CD8-positive, alpha-beta T cell (primary cell): ENCODE measurements at regions of chr12 and their contacts with region 1.

Region 1: DNA sequence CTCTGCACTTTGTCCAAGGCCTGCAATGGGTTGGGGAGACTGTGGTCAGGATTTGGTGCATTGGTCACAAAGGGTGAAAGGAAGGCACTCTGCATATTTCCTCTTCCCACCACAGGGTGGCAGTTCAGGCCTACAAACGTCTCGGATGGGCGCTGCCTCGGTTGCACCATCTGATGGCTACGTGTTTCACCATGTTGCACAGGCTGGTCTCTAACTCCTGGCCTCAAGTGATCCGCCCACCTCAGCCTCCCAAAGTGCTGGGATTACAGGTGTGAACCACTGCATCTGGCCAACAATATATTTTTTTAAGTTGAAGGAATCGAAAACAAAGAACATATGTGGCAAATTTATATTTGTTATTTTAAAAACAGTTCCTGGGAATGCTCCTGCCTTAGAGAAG is 35.1 kb downstream of the TMBIM6 start:
- DNase-seq: peak in 8 of 9 experiments; percentile 20 to 72 (median 48)
- ATAC-seq: peak; percentile 74
- H3K4me3 ChIP-seq: no peak overlapping the region
- H3K4me3 Mint-ChIP-seq: no peak overlapping the region
- H3K27ac ChIP-seq: no peak overlapping the region
- H3K27ac Mint-ChIP-seq: no peak overlapping the region
- H3K4me1 ChIP-seq: peaks cover 10% of the 10 kb centered on the region
- H3K4me1 Mint-ChIP-seq: peaks cover 16% of the 10 kb centered on the region
- H3K27me3 ChIP-seq: no peaks in the 10 kb centered on the region
- H3K27me3 Mint-ChIP-seq: peaks cover 24% of the 10 kb centered on the region
- CTCF ChIP-seq: peak; percentile 55

Region 2: DNA sequence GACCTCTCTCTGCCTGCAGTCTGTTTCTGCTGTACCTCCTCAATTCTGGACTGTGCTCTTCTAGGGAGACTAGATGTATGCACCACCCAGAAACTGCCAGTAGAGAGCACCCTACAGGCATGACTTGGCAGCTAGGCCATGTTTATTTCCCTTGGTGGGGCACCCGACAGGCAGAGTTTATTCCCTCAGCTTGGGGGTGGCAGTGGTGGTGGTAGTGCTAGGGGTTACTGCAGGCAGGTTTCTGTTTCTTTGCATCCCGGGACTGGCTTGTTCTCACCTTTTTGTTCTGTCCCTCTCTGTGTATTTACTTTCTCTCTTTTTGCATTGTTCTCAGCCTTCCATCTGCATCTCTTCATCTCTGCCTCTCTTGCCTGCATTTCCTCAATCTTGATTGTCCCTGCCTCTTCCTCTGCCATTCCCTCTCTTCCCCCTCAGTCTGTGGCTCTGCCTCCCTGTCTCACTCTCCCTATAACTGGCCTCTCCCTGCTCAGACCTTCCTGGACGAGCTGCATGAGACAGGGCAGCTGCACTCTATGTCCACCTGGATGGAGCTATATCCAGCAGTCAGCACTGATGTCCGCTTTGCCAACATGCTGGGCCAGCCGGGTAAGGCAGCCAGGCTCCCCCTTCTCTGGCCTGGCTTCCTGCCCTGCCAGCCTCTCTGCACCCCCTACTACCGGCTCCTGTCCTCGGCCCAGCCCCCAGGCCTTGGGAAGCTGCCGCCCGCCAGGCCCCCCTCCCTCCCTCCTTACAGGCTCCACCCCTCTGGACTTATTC is 139.2 kb before region 1 on chr12:
- CTCF ChIA-PET with region 1: interaction called, 5 read pairs
- POLR2A ChIA-PET with region 1: no interaction called
- intact Hi-C with region 1: loop called (anchors 2 kb)
- DNase-seq: peak in 8 of 9 experiments; percentile 39 to 76 (median 62)
- ATAC-seq: peak; percentile 99
- H3K4me3 ChIP-seq: no peak overlapping the region
- H3K4me3 Mint-ChIP-seq: no peak overlapping the region
- H3K27ac ChIP-seq: no peak overlapping the region
- H3K27ac Mint-ChIP-seq: peak overlapping the region; percentile 46
- H3K4me1 ChIP-seq: peaks cover 21% of the 10 kb centered on the region
- H3K4me1 Mint-ChIP-seq: peaks cover 29% of the 10 kb centered on the region
- H3K27me3 ChIP-seq: no peaks in the 10 kb centered on the region
- H3K27me3 Mint-ChIP-seq: no peaks in the 10 kb centered on the region
- CTCF ChIP-seq: peak; percentile 65

Region 3: GRCh38 chr12:49662998-49663843 is 113.2 kb before region 1 on chr12:
- CTCF ChIA-PET with region 1: no interaction called
- POLR2A ChIA-PET with region 1: no interaction called
- intact Hi-C with region 1: no loop called
- DNase-seq: peak; percentile 47 to 92 (median 80)
- ATAC-seq: peak; percentile 98
- H3K4me3 ChIP-seq: peak overlapping the region; percentile 27 to 42
- H3K4me3 Mint-ChIP-seq: peak overlapping the region; percentile 83
- H3K27ac ChIP-seq: peak overlapping the region; percentile 61 to 93
- H3K27ac Mint-ChIP-seq: peak overlapping the region; percentile 99
- H3K4me1 ChIP-seq: peaks cover 59% of the 10 kb centered on the region
- H3K4me1 Mint-ChIP-seq: peaks cover 83% of the 10 kb centered on the region
- H3K27me3 ChIP-seq: no peaks in the 10 kb centered on the region
- H3K27me3 Mint-ChIP-seq: no peaks in the 10 kb centered on the region
- CTCF ChIP-seq: no peak

Region 4: GRCh38 chr12:49720214-49720613 is 56.2 kb before region 1 on chr12:
- CTCF ChIA-PET with region 1: interaction called, 7 read pairs
- POLR2A ChIA-PET with region 1: no interaction called
- intact Hi-C with region 1: loop called (anchors 10 kb)
- DNase-seq: peak in 1 of 9 experiments; percentile 34
- ATAC-seq: no peak
- H3K4me3 ChIP-seq: no peak overlapping the region
- H3K4me3 Mint-ChIP-seq: no peak overlapping the region
- H3K27ac ChIP-seq: no peak overlapping the region
- H3K27ac Mint-ChIP-seq: no peak overlapping the region
- H3K4me1 ChIP-seq: no peaks in the 10 kb centered on the region
- H3K4me1 Mint-ChIP-seq: no peaks in the 10 kb centered on the region
- H3K27me3 ChIP-seq: peaks cover 0 to 2% of the 10 kb centered on the region in 2 experiments
- H3K27me3 Mint-ChIP-seq: peaks cover 12% of the 10 kb centered on the region
- CTCF ChIP-seq: no peak

Region 5: DNA sequence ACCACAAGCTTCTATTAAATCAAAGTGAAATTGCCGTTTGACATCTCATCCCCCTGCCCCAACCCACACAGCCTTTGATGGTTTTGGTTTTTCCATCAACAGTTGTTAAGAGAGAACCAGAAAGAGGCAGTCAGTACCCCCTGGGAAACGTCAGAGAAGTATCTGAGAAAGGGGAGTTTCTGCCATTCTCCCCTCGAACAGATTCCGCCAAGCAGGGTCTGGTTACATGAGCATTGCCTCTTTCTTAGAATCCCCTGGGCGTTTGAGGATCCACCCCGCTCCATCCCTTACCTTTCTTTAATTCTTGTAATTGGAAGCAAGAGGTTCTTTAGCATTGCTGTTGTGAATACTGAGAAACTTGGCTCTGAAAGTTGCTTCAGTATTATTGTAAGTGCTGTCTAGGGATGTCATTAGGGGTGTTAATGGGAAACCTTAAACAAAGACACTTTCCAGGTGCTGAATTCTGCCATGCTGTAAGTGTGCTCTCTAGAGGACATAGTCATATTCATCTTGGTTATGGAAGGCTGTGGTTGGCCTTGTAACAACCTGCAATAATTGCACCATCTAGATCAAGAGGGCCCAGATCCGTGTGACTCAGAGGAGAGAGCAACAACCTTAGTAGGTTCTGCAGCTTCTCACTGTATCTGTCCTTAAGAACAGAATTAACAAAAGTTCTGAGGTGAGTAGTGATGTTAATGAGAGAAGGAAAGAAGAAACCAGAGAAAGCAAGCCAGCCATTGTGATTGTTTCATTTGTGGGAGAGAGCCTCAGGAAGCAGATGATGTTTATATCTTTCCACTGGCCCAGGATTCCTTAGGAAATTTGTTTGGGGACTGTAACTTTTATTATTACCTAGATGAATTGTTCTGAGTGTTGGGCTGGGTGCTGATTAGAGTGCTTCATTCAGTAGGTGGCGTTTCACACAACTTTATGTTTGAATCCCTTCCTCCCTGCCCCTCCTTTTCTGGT is 26.1 kb before region 1 on chr12:
- CTCF ChIA-PET with region 1: interaction called, 11 read pairs
- POLR2A ChIA-PET with region 1: interaction called, 3 read pairs
- intact Hi-C with region 1: no loop called
- DNase-seq: peak in 6 of 9 experiments; percentile 20 to 62 (median 41)
- ATAC-seq: peak; percentile 90
- H3K4me3 ChIP-seq: peak overlapping the region in 1 of 2 experiments; percentile 6
- H3K4me3 Mint-ChIP-seq: peak overlapping the region; percentile 42
- H3K27ac ChIP-seq: peak overlapping the region in 1 of 2 experiments; percentile 18
- H3K27ac Mint-ChIP-seq: peak overlapping the region; percentile 69
- H3K4me1 ChIP-seq: peaks cover 57% of the 10 kb centered on the region
- H3K4me1 Mint-ChIP-seq: peaks cover 81% of the 10 kb centered on the region
- H3K27me3 ChIP-seq: no peaks in the 10 kb centered on the region
- H3K27me3 Mint-ChIP-seq: no peaks in the 10 kb centered on the region
- CTCF ChIP-seq: no peak

Region 6: DNA sequence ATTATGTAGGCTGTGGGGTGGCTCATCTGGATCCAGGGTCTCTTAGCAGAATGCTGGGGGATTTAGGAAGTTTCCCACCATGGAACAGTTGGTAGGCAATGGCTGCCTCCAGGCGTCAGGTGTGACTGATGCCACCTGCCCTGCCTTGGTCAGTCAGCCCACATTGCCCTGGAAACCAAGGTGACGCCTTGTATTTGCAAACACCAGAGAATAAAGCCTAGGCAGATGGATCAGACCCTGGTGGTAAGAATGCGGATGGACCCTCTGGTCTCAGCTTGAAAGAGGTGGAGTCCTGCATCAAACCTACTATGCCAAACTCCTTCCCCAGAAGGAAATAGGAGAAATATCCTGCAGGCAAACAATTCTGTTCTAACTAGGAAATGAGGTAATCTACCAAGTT is 13.6 kb after region 1 on chr12:
- CTCF ChIA-PET with region 1: interaction called, 17 read pairs
- POLR2A ChIA-PET with region 1: no interaction called
- intact Hi-C with region 1: no loop called
- DNase-seq: no peak
- ATAC-seq: no peak
- H3K4me3 ChIP-seq: no peak overlapping the region
- H3K4me3 Mint-ChIP-seq: no peak overlapping the region
- H3K27ac ChIP-seq: no peak overlapping the region
- H3K27ac Mint-ChIP-seq: no peak overlapping the region
- H3K4me1 ChIP-seq: no peaks in the 10 kb centered on the region
- H3K4me1 Mint-ChIP-seq: no peaks in the 10 kb centered on the region
- H3K27me3 ChIP-seq: no peaks in the 10 kb centered on the region
- H3K27me3 Mint-ChIP-seq: no peaks in the 10 kb centered on the region
- CTCF ChIP-seq: no peak

Region 7: DNA sequence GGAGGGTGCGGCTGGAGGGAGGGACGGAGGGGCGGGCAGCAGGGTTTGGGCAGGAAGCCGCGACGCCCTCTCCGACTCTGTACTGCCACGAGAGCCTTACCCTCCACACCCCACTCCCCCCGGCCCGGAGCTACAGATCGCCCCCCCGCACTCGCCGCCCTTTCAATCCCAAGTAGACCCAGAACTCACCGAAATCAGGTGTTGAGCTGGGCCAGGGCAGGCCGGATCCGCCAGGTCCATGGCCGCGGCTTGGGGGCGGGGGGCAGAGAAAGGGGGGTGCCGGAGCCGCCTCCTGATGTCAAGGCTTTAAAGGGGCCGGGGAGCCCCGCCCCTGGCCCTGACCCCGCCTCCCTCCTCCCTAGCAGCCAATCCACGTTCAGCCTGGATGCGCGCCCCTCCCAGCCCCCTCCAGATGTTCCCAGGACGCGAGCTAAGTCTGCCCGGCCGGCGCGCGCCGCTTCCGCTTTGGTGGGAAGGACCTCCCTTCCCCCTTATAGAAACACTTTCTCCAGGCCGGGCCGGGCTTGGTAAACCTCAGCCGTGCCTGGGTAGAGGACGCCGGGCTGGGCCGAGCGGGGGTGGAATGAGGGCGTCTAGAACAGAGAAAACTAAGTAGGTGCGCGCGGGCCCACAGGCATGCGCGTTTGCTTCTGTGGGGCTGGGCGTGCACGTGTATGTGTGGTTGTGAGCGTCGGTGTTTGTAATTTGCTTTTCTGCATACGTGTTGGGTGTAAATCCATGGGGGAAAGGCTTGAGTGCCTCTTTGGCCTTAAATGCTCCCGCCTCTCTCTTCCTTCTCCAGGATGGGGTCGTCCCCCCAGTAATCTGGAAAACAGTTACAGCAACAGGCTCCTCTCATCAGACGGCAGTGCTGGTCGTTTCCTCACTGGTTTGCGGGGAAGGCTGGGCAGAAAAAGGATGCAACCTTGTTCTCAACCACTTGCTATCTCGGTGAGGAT is 52.0 kb after region 1 on chr12 and contains the start of gene NCKAP5L:
- CTCF ChIA-PET with region 1: interaction called, 12 read pairs
- POLR2A ChIA-PET with region 1: interaction called, 3 read pairs
- intact Hi-C with region 1: no loop called
- DNase-seq: peak; percentile 86 to 96 (median 94)
- ATAC-seq: peak; percentile 97
- H3K4me3 ChIP-seq: peak within 1 kb of the TSS; percentile 68 to 91
- H3K4me3 Mint-ChIP-seq: peak within 1 kb of the TSS; percentile 97
- H3K27ac ChIP-seq: peak within 1 kb of the TSS; percentile 65 to 69
- H3K27ac Mint-ChIP-seq: peak within 1 kb of the TSS; percentile 97
- H3K4me1 ChIP-seq: peaks cover 15% of the 10 kb centered on the region
- H3K4me1 Mint-ChIP-seq: peaks cover 39% of the 10 kb centered on the region
- H3K27me3 ChIP-seq: no peaks in the 10 kb centered on the region
- H3K27me3 Mint-ChIP-seq: no peaks in the 10 kb centered on the region
- CTCF ChIP-seq: no peak
- total RNA-seq, gene NCKAP5L: 10.6 to 10.7 TPM

Region 8: GRCh38 chr12:49945394-49946080 is 169.1 kb after region 1 on chr12:
- CTCF ChIA-PET with region 1: interaction called, 3 read pairs
- POLR2A ChIA-PET with region 1: no interaction called
- intact Hi-C with region 1: loop called in 1 of 2 experiments (anchors 10 kb)
- DNase-seq: peak; percentile 59 to 86 (median 80)
- ATAC-seq: peak; percentile 97
- H3K4me3 ChIP-seq: peak overlapping the region in 1 of 2 experiments; percentile 34
- H3K4me3 Mint-ChIP-seq: peak overlapping the region; percentile 84
- H3K27ac ChIP-seq: no peak overlapping the region
- H3K27ac Mint-ChIP-seq: peak overlapping the region; percentile 78
- H3K4me1 ChIP-seq: no peaks in the 10 kb centered on the region
- H3K4me1 Mint-ChIP-seq: peaks cover 15% of the 10 kb centered on the region
- H3K27me3 ChIP-seq: no peaks in the 10 kb centered on the region
- H3K27me3 Mint-ChIP-seq: peaks cover 6% of the 10 kb centered on the region
- CTCF ChIP-seq: peak; percentile 82

Region 9: DNA sequence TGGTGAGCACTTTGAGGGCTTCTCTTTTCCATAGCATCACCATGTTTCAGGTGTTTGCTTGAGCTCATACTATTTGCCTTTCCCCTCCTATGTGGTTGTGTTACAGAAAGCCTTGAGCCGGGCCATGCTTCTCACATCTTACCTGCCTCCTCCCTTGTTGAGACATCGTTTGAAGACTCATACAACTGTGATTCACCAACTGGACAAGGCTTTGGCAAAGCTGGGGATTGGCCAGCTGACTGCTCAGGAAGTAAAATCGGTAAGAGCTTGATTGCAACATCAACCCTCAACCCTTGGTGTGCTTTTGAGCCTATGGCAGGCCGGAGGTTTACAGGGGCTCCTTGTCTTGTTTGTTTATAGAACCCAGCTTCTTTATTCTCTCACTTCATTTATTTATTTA is 1279.8 kb after region 1 on chr12:
- CTCF ChIA-PET with region 1: no interaction called
- POLR2A ChIA-PET with region 1: no interaction called
- intact Hi-C with region 1: no loop called
- DNase-seq: no peak
- ATAC-seq: no peak
- H3K4me3 ChIP-seq: no peak overlapping the region
- H3K4me3 Mint-ChIP-seq: no peak overlapping the region
- H3K27ac ChIP-seq: no peak overlapping the region
- H3K27ac Mint-ChIP-seq: no peak overlapping the region
- H3K4me1 ChIP-seq: no peaks in the 10 kb centered on the region
- H3K4me1 Mint-ChIP-seq: peaks cover 8% of the 10 kb centered on the region
- H3K27me3 ChIP-seq: no peaks in the 10 kb centered on the region
- H3K27me3 Mint-ChIP-seq: no peaks in the 10 kb centered on the region
- CTCF ChIP-seq: no peak

Region 10: DNA sequence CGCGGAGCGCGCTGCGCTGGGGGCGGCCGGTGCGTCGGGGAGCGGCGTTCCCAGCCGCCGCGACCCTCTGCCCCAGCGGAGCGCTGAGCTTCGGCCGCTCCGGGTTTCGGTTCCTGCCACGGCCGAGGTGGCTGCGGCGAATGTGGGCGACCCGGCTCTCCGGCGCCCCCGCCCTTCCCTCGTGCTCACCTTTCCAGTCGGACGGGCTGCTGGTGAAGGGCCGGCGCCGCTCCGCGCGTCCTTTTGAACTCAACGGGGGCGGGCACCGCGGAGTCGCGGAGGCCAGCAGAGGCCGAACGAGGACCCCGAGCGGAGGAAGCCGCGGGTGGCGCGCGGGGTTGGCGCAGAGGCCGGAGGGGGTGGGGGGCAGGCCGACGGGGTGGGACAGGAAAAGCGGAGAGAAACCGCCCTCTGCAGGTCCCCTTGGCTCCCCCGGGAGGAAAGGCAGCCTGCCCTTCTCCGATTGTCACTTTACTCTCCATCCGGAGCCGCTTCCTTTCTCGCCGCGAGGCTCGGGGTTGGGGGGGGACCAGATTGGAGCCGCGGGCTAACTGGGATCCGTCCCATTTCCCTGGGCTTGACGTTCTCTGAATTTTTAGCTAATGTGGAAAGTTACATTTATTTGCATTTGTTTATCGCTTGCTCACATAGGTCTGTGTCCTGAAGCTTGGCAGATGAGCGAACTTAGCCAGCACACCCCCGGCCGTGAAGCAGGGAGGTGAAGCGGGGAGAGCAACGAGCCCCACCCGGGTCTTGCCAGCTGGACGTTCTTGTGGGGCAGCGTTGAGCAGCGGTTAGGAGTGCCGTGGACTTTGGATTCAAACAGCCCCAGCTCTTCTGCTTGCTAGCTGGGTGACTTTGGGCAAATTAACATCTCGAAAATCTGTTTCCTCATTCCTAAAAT is 1493.9 kb after region 1 on chr12 and contains the start of gene SMAGP:
- CTCF ChIA-PET with region 1: no interaction called
- POLR2A ChIA-PET with region 1: no interaction called
- intact Hi-C with region 1: no loop called
- DNase-seq: peak in 8 of 9 experiments; percentile 28 to 76 (median 52)
- ATAC-seq: peak; percentile 50
- H3K4me3 ChIP-seq: peak within 1 kb of the TSS; percentile 54 to 71
- H3K4me3 Mint-ChIP-seq: peak within 1 kb of the TSS; percentile 90
- H3K27ac ChIP-seq: peak within 1 kb of the TSS; percentile 42 to 58
- H3K27ac Mint-ChIP-seq: peak within 1 kb of the TSS; percentile 84
- H3K4me1 ChIP-seq: peaks cover 16% of the 10 kb centered on the region
- H3K4me1 Mint-ChIP-seq: peaks cover 23% of the 10 kb centered on the region
- H3K27me3 ChIP-seq: no peaks in the 10 kb centered on the region
- H3K27me3 Mint-ChIP-seq: no peaks in the 10 kb centered on the region
- CTCF ChIP-seq: no peak
- total RNA-seq, gene SMAGP: 1.9 to 2.3 TPM